ENCODE measurements at regions of chr21 and their contacts with region 1.

Region 1: DNA sequence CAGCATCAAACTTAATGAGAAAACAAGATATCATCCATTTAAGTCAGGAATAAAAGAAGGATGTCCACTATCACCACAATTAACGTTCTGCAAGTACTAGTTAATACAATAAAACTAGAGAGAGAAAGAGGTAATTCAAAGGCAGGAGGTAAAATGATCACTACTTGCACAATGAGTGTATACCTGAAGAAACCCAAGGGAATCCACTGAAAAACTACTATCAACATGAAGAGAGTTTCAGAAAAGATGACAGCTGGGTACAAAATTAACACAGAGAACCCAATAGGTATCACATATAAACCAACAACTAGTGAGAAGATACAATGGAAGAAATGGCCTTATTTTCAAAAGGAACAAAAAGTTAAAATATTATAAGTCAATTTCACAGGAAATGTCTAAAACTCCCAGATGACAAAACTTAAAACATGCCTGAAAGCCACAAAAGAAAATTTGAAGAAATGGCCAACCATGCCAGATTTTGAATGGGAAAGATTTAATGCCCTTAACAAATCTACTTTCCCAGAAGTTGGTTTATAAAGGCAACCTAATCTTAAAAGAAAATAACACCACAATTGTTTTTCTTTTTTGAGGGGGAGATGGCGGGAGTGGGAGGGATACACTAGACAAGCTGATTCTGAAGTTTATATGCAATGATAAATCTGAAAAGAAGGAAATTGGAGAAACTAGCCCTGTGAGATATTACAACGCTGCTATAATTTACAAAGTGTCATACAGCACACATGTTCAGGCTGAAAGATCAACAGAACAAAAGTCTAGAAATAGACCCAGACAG is 17.8 kb downstream of the VPS26C start:
- DNase-seq: no peak
- ATAC-seq: no peak
- H3K4me3 Mint-ChIP-seq: no peak overlapping the region
- H3K27ac Mint-ChIP-seq: no peak overlapping the region
- H3K4me1 Mint-ChIP-seq: peaks cover 34% of the 10 kb centered on the region
- H3K27me3 Mint-ChIP-seq: no peaks in the 10 kb centered on the region
- CTCF ChIP-seq: no peak

Region 2: DNA sequence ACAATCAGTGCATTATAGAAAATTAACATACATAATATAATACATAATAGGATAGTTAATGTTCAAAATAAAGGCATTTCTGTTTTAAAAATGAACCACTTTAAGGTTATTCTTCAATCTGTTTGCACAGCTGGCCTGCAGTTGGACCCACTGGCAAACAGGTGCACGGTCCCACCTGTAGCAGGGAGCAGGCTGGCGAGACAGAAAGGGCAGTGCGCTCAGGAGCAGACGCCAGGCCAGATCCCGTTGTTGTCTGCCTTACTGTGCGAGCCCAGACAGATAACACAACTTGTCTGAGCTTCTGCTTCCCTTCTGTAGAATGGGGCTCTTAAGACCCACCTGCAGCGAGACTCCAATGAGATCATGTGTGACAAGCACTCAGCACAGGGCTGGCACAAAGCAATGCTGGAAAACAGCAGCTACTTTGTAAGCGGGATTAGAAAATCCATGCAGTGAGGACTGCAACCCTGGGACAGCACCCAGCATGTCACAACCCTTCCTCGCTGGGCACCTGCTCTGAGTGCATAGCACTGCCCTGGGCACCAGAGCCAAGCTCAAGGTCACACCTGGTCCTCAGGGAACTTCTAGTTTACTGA is 15.7 kb before region 1 on chr21:
- CTCF ChIA-PET with region 1: interaction called, 3 read pairs
- POLR2A ChIA-PET with region 1: no interaction called
- intact Hi-C with region 1: loop called (anchors 2 kb)
- DNase-seq: no peak
- ATAC-seq: no peak
- H3K4me3 Mint-ChIP-seq: no peak overlapping the region
- H3K27ac Mint-ChIP-seq: no peak overlapping the region
- H3K4me1 Mint-ChIP-seq: peaks cover 14% of the 10 kb centered on the region
- H3K27me3 Mint-ChIP-seq: no peaks in the 10 kb centered on the region
- CTCF ChIP-seq: no peak

Measured in activated B cell treated with CpG ODN at 0.5 μM for 24 hours (primary cell).